BJ (cell line): ENCODE measurements at regions of chr2 and their contacts with region 1.

Region 1: DNA sequence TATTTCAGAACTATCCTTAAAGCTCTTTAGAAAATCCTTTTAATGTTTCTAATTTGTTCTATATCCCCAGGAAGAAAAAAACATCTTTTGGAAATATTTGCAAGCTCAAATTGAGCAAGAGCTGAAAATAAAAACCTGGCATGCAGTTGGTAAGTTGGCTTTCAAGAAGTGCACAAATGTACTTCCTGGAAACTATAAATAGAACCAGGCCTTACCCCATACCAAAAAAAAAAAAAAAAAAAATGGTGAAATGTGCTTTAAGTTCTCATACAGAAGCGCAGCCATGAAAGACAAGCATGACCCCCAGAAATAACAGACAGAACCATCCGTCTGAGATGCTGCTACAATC is 178.5 kb downstream of the HDAC4 start:
- DNase-seq: no peak
- H3K4me3 ChIP-seq: peak overlapping the region; percentile 32
- H3K27me3 ChIP-seq: no peaks in the 10 kb centered on the region
- CTCF ChIP-seq: no peak

Region 2: DNA sequence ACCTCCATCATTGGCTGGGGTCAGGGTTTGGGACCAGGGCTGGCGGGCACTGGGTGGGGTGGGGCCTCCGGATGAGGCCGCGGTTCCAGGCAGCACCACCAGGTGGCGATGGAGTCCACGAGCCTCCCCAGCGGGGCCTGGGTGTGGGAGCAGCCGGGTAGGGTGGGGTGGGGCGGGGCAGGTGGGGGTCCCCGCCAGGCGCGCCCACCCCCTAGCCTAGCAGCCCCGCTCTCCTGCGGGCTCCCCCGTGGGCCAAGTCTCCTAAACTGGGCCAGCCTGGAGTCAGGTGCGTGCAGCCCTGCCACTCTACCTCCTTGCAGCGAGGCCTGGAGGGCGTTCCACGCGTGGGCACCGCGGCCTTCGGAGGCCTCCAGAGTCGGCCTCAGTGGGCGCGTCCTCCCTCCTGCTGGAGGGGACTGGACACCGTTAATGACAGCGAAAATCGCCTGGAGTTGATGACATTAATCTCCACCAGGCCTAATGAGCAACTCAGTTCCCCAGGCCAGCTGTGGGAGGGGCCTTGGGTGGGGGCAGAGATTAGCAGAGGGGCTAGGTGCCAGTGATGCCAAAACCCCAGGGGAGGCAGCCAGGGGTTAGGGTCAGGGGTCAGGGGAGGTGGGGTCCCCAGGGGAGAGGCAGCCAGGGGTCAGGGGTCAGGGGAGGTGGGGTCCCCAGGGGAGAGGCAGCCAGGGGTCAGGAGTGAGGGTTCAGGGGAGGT is 186.8 kb before region 1 on chr2:
- CTCF ChIA-PET with region 1: no interaction called
- POLR2A ChIA-PET with region 1: no interaction called
- DNase-seq: no peak
- H3K4me3 ChIP-seq: no peak overlapping the region
- H3K27me3 ChIP-seq: peaks cover 4% of the 10 kb centered on the region
- CTCF ChIP-seq: peak; percentile 90

Region 3: GRCh38 chr2:239149501-239149900 is 72.8 kb before region 1 on chr2:
- CTCF ChIA-PET with region 1: no interaction called
- POLR2A ChIA-PET with region 1: interaction called, 11 read pairs
- DNase-seq: no peak
- H3K4me3 ChIP-seq: no peak overlapping the region
- H3K27me3 ChIP-seq: no peaks in the 10 kb centered on the region
- CTCF ChIP-seq: no peak

Region 4: GRCh38 chr2:239944694-239945551 is 722.6 kb after region 1 on chr2:
- CTCF ChIA-PET with region 1: no interaction called
- POLR2A ChIA-PET with region 1: no interaction called
- DNase-seq: no peak
- H3K4me3 ChIP-seq: no peak overlapping the region
- H3K27me3 ChIP-seq: no peaks in the 10 kb centered on the region
- CTCF ChIP-seq: no peak